Heart left ventricle (tissue), 16 donors: ENCODE measurements at regions of chr2 and their contacts with region 1.

Region 1: DNA sequence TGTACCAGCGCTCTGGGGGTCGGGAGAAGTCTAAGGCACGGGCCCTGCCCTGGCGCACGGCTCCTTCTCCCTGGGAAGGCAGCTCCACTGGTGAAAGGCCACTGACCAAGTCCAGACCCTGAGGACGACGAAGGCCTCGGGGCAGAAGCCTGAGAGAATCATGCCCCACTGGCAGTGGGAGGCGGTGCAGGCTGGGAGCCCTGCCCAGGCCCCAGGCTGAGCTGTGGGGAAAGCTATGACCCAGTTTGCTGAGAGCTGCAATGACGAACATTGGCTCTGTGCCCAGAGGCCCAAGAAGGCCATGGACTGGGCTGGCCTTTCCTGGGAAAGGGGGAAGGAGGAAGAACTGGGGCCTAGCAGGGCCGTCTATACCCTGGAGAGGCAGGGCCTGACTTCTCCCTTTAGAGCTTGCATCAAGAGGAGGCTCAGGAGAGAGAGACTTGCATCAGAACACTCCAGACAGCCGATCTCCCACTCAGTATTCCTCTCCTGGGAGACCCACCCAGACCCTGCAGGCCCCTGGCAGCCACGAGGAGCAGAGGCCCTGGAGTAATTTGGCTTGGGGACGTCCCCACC is 32.9 kb downstream of the HS1BP3 start:
- DNase-seq: peak; percentile 96 to 99 (median 98)
- ATAC-seq: peak; percentile 79 to 84 (median 82)
- H3K4me3 ChIP-seq: peak overlapping the region in 1 of 12 donors; percentile 5
- H3K27ac ChIP-seq: peak overlapping the region; percentile 86 to 99 (median 95)
- H3K4me1 ChIP-seq: peaks cover 43 to 97% (median 85%) of the 10 kb centered on the region in 12 donors
- H3K27me3 ChIP-seq: no peaks in the 10 kb centered on the region
- CTCF ChIP-seq: peak; percentile 15 to 75 (median 52)
- POLR2A ChIP-seq: peak in 1 of 2 donors; percentile 48

Region 2: DNA sequence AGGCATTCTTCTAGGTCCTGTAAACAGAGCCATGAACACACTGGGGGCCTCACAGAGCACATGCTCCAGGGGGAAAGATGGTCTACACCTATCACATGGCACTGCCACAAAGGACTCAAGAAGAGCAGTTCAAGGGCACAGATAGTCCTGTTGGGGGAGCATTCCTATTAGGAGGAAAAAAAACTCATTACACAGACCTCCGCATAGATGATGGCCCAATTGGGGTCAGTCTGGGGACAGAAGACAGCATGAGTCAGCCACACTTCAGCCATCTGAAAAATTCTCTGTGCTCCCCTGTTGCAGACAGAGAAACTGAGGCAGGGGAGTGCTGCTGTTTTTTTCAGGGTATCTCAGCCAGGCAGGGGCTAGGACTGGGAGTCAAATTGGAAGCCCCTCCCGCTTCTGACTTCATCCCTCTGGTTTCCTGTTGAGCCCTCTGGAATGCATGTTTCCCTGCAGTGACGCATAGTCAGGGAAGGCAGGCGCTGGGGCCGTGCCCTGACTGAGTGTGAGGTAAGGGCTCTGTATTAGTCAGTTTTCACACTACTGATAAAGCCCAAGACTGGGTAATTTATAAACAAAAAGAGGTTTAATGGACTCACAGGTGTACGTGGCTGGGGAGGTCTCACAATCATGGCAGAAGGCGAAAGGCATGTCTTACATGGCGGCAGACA is 103.2 kb before region 1 on chr2:
- intact Hi-C with region 1: no loop called
- DNase-seq: peak in 4 of 5 donors; percentile 39 to 65 (median 62)
- ATAC-seq: peak in 3 of 4 donors; percentile 83 to 85 (median 84)
- H3K4me3 ChIP-seq: no peak overlapping the region
- H3K27ac ChIP-seq: peak overlapping the region in 4 of 12 donors; percentile 13 to 42 (median 27)
- H3K4me1 ChIP-seq: peaks cover 0 to 11% (median 0%) of the 10 kb centered on the region in 12 donors
- H3K27me3 ChIP-seq: no peaks in the 10 kb centered on the region
- CTCF ChIP-seq: no peak
- POLR2A ChIP-seq: no peak

Region 3: DNA sequence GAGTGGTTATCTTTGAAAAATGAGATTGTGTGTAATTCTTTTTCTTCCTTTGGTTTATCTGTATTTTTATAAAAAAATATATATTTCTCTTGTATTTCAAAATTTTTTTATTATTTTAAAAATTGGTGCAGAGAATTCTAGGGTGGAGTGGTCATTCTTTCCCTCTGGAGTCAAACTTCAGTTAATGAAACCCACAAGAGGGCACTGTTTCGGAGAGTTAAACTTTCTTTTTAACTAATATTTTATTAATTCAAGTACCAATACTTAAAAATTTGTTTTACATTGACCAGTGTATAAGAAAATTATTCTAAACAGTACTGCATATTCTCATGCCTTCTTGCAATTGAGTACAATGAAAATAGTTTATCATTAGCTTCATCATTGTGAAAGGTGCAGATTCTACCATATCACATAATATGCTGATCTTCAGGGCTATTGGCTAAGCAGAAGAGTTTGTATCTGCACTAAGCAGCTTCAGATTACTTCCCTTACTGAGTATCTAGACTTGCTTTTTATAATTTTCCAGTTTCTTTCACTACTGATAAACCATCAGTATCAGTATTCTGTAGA is 17.1 kb before region 1 on chr2:
- intact Hi-C with region 1: loop called in 2 of 10 experiments (anchors 2 kb)
- DNase-seq: no peak
- ATAC-seq: no peak
- H3K4me3 ChIP-seq: no peak overlapping the region
- H3K27ac ChIP-seq: peak overlapping the region in 10 of 12 donors; percentile 23 to 92 (median 80)
- H3K4me1 ChIP-seq: peaks cover 13 to 73% (median 55%) of the 10 kb centered on the region in 12 donors
- H3K27me3 ChIP-seq: no peaks in the 10 kb centered on the region
- CTCF ChIP-seq: peak; percentile 22 to 64 (median 48)
- POLR2A ChIP-seq: no peak